Activated CD8-positive, alpha-beta T cell treated with anti-CD3 and anti-CD28 coated beads for 36 hours (primary cell): ENCODE measurements at regions of chr1 and their contacts with region 1.

Region 1: DNA sequence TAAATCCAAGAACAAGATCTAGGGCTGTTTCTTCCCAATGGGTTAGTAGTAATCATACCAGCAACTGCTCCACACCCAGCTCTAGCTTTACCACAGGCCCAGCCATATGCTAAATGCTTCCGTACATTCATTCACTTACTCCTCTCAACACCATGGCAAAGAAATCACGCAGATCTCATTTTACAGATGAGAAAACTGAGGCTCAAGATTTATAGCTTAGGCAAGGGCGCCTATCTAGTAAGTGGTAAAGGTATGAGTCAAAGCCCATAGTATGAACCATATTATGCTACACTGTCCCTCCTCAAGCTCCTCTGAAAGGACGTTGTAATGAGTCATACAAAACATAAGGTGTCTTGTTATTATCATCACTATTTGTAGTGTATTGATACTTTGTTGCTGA is 82.2 kb downstream of the NIBAN1 start:
- DNase-seq: peak; percentile 42
- ATAC-seq: peak; percentile 68
- H3K4me3 Mint-ChIP-seq: no peak overlapping the region
- H3K27ac Mint-ChIP-seq: peak overlapping the region; percentile 73
- H3K4me1 Mint-ChIP-seq: peaks cover 34% of the 10 kb centered on the region
- H3K27me3 Mint-ChIP-seq: peaks cover 1% of the 10 kb centered on the region
- CTCF ChIP-seq: no peak

Region 2: GRCh38 chr1:184866991-184867788 is 24.9 kb before region 1 on chr1:
- CTCF ChIA-PET with region 1: interaction called, 5 read pairs
- POLR2A ChIA-PET with region 1: interaction called, 10 read pairs
- intact Hi-C with region 1: loop called (anchors 2 kb)
- DNase-seq: peak; percentile 83
- ATAC-seq: peak; percentile 90
- H3K4me3 Mint-ChIP-seq: peak overlapping the region; percentile 34
- H3K27ac Mint-ChIP-seq: peak overlapping the region; percentile 94
- H3K4me1 Mint-ChIP-seq: peaks cover 43% of the 10 kb centered on the region
- H3K27me3 Mint-ChIP-seq: peaks cover 2% of the 10 kb centered on the region
- CTCF ChIP-seq: no peak

Region 3: GRCh38 chr1:184910691-184911091 is 18.6 kb after region 1 on chr1:
- CTCF ChIA-PET with region 1: no interaction called
- POLR2A ChIA-PET with region 1: no interaction called
- intact Hi-C with region 1: no loop called
- DNase-seq: no peak
- ATAC-seq: no peak
- H3K4me3 Mint-ChIP-seq: no peak overlapping the region
- H3K27ac Mint-ChIP-seq: no peak overlapping the region
- H3K4me1 Mint-ChIP-seq: peaks cover under 1% of the 10 kb centered on the region
- H3K27me3 Mint-ChIP-seq: no peaks in the 10 kb centered on the region
- CTCF ChIP-seq: no peak

Region 4: DNA sequence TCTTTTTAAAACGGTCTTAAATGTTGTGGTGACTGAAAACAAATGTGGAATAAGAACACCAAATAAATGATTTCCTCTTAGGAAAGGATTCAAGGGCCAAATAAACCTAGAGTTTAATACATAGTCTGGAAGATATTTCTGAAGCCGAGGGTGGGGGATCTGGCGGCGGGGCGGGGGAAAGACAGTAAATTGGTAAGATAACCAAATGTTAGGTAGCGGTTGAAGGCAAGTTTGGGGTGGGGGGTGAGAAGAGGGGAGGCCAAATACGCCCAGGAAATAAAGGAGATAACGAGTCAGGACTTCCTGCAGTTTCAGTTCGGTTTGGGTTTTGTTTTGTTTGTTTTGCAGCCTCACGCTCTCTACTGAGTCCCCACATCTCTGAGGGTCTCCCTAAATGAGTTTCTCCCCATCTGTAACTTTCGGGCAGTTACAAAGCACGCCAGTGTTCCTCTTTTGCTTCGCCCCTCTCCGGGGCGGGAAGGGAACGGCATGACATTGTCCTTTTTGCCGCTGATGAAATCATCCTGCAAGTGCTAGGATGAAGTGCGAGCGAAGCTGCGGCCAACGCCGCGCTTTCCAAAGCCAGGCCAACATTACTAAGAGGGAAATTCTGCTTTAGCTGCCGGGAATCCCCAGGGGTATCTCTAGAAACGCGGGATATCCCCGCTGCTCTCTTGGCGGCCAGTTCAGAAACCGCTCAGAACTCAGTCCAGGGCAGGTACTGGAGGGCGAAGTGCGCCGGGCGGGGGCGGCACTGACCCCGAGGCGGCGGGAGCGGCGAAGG is 81.3 kb after region 1 on chr1:
- CTCF ChIA-PET with region 1: interaction called, 5 read pairs
- POLR2A ChIA-PET with region 1: interaction called, 23 read pairs
- intact Hi-C with region 1: no loop called
- DNase-seq: peak; percentile 80
- ATAC-seq: peak; percentile 65
- H3K4me3 Mint-ChIP-seq: peak overlapping the region; percentile 80
- H3K27ac Mint-ChIP-seq: peak overlapping the region; percentile 98
- H3K4me1 Mint-ChIP-seq: peaks cover 51% of the 10 kb centered on the region
- H3K27me3 Mint-ChIP-seq: peaks cover 20% of the 10 kb centered on the region
- CTCF ChIP-seq: no peak